Breast epithelium (tissue), 4 donors: ENCODE measurements at regions of chr1 and their contacts with region 1.

Region 1: DNA sequence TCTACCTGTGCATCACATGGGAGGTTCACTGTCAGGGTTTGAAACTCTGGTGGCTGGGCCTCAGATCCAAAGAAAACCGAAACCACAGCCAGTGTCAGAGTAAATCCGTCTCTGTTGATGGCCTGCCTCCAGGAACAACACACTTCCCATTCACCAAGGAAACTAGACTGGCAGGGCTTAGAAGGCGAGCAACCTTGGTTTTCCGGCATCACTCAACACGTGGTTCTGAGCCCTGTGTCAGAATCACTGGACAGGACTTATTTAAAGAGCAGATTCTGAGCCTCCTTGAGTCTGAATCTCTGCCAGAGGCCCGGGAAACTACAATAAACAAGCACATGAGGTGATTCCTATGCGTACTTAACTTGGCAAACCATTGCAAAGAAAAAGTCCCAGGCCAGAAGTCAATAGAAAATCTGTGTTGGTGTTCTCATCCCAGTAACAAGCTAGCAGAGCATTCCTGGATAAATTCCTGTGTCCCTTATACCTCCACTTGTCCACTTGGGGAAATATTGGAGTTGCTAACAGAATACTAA is 70.0 kb downstream of the KCTD3 start:
- DNase-seq: peak; percentile 56 to 79
- H3K4me3 ChIP-seq: peak overlapping the region; percentile 11 to 34 (median 17)
- H3K27ac ChIP-seq: peak overlapping the region; percentile 83 to 89
- H3K4me1 ChIP-seq: peaks cover 0 to 5% of the 10 kb centered on the region in 2 donors
- H3K27me3 ChIP-seq: no peaks in the 10 kb centered on the region
- CTCF ChIP-seq: no peak
- POLR2A ChIP-seq: no peak

Region 2: GRCh38 chr1:214155987-214156625 is 1481.0 kb before region 1 on chr1:
- intact Hi-C with region 1: no loop called
- DNase-seq: no peak
- H3K4me3 ChIP-seq: no peak overlapping the region
- H3K27ac ChIP-seq: no peak overlapping the region
- H3K4me1 ChIP-seq: no peaks in the 10 kb centered on the region
- H3K27me3 ChIP-seq: no peaks in the 10 kb centered on the region
- CTCF ChIP-seq: no peak
- POLR2A ChIP-seq: no peak

Region 3: GRCh38 chr1:215292932-215293331 is 344.2 kb before region 1 on chr1:
- intact Hi-C with region 1: no loop called
- DNase-seq: no peak
- H3K4me3 ChIP-seq: no peak overlapping the region
- H3K27ac ChIP-seq: no peak overlapping the region
- H3K4me1 ChIP-seq: no peaks in the 10 kb centered on the region
- H3K27me3 ChIP-seq: no peaks in the 10 kb centered on the region
- CTCF ChIP-seq: no peak
- POLR2A ChIP-seq: no peak

Region 4: GRCh38 chr1:215306426-215306825 is 330.7 kb before region 1 on chr1:
- intact Hi-C with region 1: no loop called
- DNase-seq: no peak
- H3K4me3 ChIP-seq: no peak overlapping the region
- H3K27ac ChIP-seq: no peak overlapping the region
- H3K4me1 ChIP-seq: no peaks in the 10 kb centered on the region
- H3K27me3 ChIP-seq: no peaks in the 10 kb centered on the region
- CTCF ChIP-seq: no peak
- POLR2A ChIP-seq: no peak

Region 5: DNA sequence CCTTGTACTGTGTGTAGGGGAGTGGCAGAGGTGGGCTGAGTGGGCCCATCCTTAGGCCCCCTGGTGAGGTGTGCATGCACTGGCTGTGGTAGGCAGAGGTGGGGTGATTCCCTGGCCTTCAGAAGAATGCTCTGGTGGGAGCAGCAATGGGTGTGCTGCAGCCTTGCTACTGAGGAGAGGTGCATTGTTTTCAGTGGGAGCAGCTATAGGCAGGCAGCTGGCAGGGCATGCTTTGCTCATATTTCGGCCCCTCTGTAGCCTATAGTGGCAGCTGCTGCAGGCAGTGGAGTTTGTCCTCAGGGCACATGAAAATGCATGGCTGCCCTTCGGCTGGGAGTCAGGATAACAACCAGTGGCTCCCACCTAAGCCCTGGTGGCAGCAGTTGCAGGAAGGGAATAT is 80.1 kb before region 1 on chr1:
- intact Hi-C with region 1: no loop called
- DNase-seq: no peak
- H3K4me3 ChIP-seq: no peak overlapping the region
- H3K27ac ChIP-seq: no peak overlapping the region
- H3K4me1 ChIP-seq: no peaks in the 10 kb centered on the region
- H3K27me3 ChIP-seq: no peaks in the 10 kb centered on the region
- CTCF ChIP-seq: no peak
- POLR2A ChIP-seq: no peak

Region 6: DNA sequence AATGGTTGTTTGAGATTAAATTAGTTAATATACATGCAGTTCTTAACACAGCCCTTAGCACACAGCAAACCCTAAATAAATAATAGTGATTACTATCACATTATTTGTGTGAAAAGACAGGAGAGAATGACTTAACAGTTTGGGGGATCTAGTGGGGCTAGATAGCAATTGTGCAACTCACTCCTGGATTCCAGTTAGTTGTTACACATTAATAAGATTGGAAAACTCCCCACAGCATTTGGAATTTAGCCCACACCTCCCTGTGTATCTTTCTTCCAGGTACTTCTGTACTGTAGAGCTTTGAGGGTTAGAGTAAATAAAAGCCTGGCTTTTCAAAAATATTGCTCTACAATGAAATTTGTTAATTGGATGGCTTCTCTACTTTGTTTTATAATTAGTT is 23.2 kb after region 1 on chr1:
- intact Hi-C with region 1: loop called (anchors 1 kb)
- DNase-seq: no peak
- H3K4me3 ChIP-seq: no peak overlapping the region
- H3K27ac ChIP-seq: no peak overlapping the region
- H3K4me1 ChIP-seq: no peaks in the 10 kb centered on the region
- H3K27me3 ChIP-seq: no peaks in the 10 kb centered on the region
- CTCF ChIP-seq: no peak
- POLR2A ChIP-seq: no peak